Activated naive CD4-positive, alpha-beta T cell treated with anti-CD3 and anti-CD28 coated beads for 36 hours (primary cell): ENCODE measurements at regions of chr19 and their contacts with region 1.

Region 1: GRCh38 chr19:49817964-49818648 is at the start of gene MED25:
- DNase-seq: peak; percentile 87
- H3K4me3 Mint-ChIP-seq: peak within 1 kb of the TSS; percentile 92
- H3K27ac Mint-ChIP-seq: peak within 1 kb of the TSS; percentile 99
- H3K4me1 Mint-ChIP-seq: peaks cover 16% of the 10 kb centered on the region
- H3K27me3 Mint-ChIP-seq: no peaks in the 10 kb centered on the region
- total RNA-seq, gene MED25: 32.4 to 39.2 TPM

Region 2: GRCh38 chr19:49497047-49497788 is 320.9 kb before region 1 on chr19:
- CTCF ChIA-PET with region 1: no interaction called
- intact Hi-C with region 1: loop called (anchors 1 kb)
- DNase-seq: peak; percentile 79
- H3K4me3 Mint-ChIP-seq: peak overlapping the region; percentile 87
- H3K27ac Mint-ChIP-seq: peak overlapping the region; percentile 96
- H3K4me1 Mint-ChIP-seq: peaks cover 49% of the 10 kb centered on the region
- H3K27me3 Mint-ChIP-seq: no peaks in the 10 kb centered on the region

Region 3: DNA sequence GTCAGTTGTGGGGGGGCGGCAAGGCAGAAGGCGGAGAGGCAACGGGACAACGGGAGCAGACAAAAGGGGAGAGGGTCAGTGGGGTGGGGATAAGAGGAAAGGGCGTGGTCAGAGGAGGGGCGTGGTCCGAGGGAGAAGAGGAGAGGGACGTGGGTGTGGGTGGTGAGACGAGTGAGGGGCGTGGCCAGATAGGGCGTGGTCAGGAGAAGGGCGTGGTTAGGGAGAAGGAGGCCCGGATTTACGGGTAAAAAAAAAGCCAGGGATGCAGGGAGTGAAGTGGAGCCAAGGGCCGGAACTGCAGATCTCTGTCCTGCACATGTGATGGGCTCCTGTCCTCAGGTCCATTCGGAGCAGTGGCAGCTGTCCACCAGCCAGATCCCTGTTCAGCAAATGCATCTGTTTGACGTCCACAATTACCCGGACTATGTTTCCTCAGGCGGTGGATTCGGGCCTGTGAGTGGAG is 105.7 kb before region 1 on chr19:
- CTCF ChIA-PET with region 1: interaction called, 3 read pairs
- intact Hi-C with region 1: loop called (anchors 1 kb)
- DNase-seq: no peak
- H3K4me3 Mint-ChIP-seq: no peak overlapping the region
- H3K27ac Mint-ChIP-seq: no peak overlapping the region
- H3K4me1 Mint-ChIP-seq: peaks cover 6% of the 10 kb centered on the region
- H3K27me3 Mint-ChIP-seq: no peaks in the 10 kb centered on the region

Region 4: DNA sequence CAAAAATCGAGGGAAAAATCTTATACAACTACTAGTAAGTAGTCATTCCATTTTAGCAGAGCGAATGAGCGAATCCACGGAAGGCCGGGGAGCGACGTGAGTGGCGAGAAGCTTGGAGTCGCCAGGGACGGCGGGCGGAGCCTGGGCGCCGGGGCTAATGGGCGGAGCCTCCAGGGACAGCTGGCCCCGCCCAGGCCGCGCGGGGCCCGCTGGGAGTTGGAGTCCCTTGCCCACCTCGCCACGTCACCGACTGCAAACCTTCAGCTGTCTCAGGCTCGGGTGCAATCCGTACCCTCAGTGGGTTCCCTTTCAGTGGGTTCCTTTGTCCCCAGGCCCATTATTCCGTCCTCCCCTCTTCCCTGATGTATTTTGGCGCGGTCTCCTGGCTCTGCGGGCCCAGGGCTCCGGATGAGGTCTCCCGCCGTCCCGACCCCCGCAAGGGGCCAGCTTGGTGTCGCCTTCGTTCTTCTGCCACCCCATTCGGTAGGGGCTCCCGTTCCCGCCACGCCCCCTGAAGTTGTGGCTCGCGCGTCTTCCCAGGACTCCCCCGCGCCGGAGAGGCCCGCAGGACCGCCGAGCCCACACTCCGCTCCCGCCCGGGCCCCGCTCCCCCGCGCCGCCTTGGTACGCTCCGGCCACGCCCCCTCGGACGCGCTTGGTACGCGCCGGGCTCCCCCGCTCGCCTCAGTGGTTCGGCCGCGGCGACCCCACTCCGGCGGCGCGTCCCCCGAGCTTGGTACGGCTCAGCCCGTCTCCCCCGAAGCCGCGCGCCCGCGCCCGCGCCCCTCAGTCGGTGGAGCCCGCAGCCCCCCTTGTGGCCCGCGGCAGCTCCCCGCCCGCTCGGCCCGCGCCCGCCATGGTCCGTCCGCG is 32.6 kb after region 1 on chr19 and contains the start of gene PTOV1:
- CTCF ChIA-PET with region 1: no interaction called
- intact Hi-C with region 1: loop called (anchors 1 kb)
- DNase-seq: peak; percentile 91
- H3K4me3 Mint-ChIP-seq: peak within 1 kb of the TSS; percentile 87
- H3K27ac Mint-ChIP-seq: peak within 1 kb of the TSS; percentile 95
- H3K4me1 Mint-ChIP-seq: peaks cover 42% of the 10 kb centered on the region
- H3K27me3 Mint-ChIP-seq: no peaks in the 10 kb centered on the region
- total RNA-seq, gene PTOV1: 66.0 to 68.0 TPM